Tibial artery (tissue), 4 donors: ENCODE measurements at regions of chr5 and their contacts with region 1.

Region 1: GRCh38 chr5:123610665-123611405 is 98.9 kb downstream of the CSNK1G3 start:
- DNase-seq: no peak
- H3K4me3 ChIP-seq: no peak overlapping the region
- H3K27ac ChIP-seq: peak overlapping the region in 1 of 2 donors; percentile 11
- H3K4me1 ChIP-seq: no peaks in the 10 kb centered on the region
- H3K27me3 ChIP-seq: no peaks in the 10 kb centered on the region
- CTCF ChIP-seq: peak; percentile 91 to 95

Region 2: DNA sequence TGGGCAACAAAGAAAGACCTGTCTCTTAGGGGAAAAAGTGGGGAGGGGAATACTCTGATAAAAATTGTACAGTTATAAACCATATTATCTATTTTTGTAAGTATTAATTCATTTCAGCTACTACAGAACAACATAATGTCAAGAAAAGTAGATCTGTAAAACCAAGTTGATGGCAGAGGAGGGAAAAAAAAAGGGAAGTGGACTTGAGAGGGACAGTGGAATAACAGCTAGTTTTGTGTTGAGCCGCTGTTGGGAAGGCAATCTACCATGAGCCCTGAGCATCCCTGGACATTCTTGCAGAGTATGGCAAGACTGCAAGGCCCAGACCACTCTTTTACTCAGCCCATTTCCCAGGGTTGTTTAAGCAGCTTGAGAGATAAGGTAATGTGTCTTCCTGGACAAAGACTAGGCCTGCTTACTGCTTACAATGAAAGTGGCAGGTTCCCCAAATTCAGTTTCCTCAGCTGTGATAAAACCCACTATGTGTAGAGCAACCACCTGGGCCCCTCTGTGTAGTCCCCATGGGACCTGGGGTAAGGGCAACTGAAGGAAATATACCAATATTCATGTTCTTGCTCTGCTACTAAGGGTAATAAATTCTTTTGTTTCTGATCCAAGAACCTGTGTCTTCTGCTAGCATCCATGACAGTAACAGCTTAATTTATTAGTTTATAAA is 212.6 kb before region 1 on chr5:
- intact Hi-C with region 1: loop called (anchors 10 kb)
- DNase-seq: no peak
- H3K4me3 ChIP-seq: no peak overlapping the region
- H3K27ac ChIP-seq: no peak overlapping the region
- H3K4me1 ChIP-seq: no peaks in the 10 kb centered on the region
- H3K27me3 ChIP-seq: no peaks in the 10 kb centered on the region
- CTCF ChIP-seq: no peak

Region 3: GRCh38 chr5:123855608-123856007 is 244.8 kb after region 1 on chr5:
- intact Hi-C with region 1: no loop called
- DNase-seq: no peak
- H3K4me3 ChIP-seq: no peak overlapping the region
- H3K27ac ChIP-seq: no peak overlapping the region
- H3K4me1 ChIP-seq: no peaks in the 10 kb centered on the region
- H3K27me3 ChIP-seq: no peaks in the 10 kb centered on the region
- CTCF ChIP-seq: no peak